ENCODE measurements at regions of chr4 and their contacts with region 1.

Region 1: GRCh38 chr4:139754938-139755337 is 89.3 kb downstream of the MGST2 start:
- DNase-seq: no peak
- ATAC-seq: no peak
- H3K4me3 ChIP-seq: no peak overlapping the region
- H3K27ac ChIP-seq: no peak overlapping the region
- H3K4me1 ChIP-seq: peaks cover 0 to 17% (median 0%) of the 10 kb centered on the region in 9 donors
- H3K27me3 ChIP-seq: no peaks in the 10 kb centered on the region
- CTCF ChIP-seq: no peak

Region 2: GRCh38 chr4:139872274-139872673 is 117.3 kb after region 1 on chr4:
- intact Hi-C with region 1: loop called in 1 of 10 experiments (anchors 10 kb)
- DNase-seq: no peak
- ATAC-seq: peak in 3 of 8 donors; percentile 35 to 75 (median 49)
- H3K4me3 ChIP-seq: no peak overlapping the region
- H3K27ac ChIP-seq: peak overlapping the region in 1 of 10 donors; percentile 6
- H3K4me1 ChIP-seq: peaks cover 0 to 22% (median 6%) of the 10 kb centered on the region in 9 donors
- H3K27me3 ChIP-seq: no peaks in the 10 kb centered on the region
- CTCF ChIP-seq: no peak